MCF 10A (cell line): ENCODE measurements at regions of chr22 and their contacts with region 1.

Region 1: GRCh38 chr22:37792494-37792893 is 15.2 kb upstream of the GCAT start:
- DNase-seq: no peak
- H3K4me3 Mint-ChIP-seq: no peak overlapping the region
- H3K27ac Mint-ChIP-seq: no peak overlapping the region
- H3K4me1 Mint-ChIP-seq: peaks cover 5% of the 10 kb centered on the region
- H3K27me3 Mint-ChIP-seq: no peaks in the 10 kb centered on the region
- CTCF ChIP-seq: no peak

Region 2: GRCh38 chr22:37538590-37539357 is 253.7 kb before region 1 on chr22:
- CTCF ChIA-PET with region 1: no interaction called
- POLR2A ChIA-PET with region 1: no interaction called
- intact Hi-C with region 1: loop called (anchors 5 kb)
- DNase-seq: peak; percentile 95
- H3K4me3 Mint-ChIP-seq: no peak overlapping the region
- H3K27ac Mint-ChIP-seq: peak overlapping the region; percentile 34
- H3K4me1 Mint-ChIP-seq: peaks cover 32% of the 10 kb centered on the region
- H3K27me3 Mint-ChIP-seq: no peaks in the 10 kb centered on the region
- CTCF ChIP-seq: peak; percentile 97

Region 3: GRCh38 chr22:37623075-37624016 is 169.1 kb before region 1 on chr22:
- CTCF ChIA-PET with region 1: interaction called, 5 read pairs
- POLR2A ChIA-PET with region 1: no interaction called
- intact Hi-C with region 1: loop called (anchors 1 kb)
- DNase-seq: peak; percentile 63
- H3K4me3 Mint-ChIP-seq: no peak overlapping the region
- H3K27ac Mint-ChIP-seq: no peak overlapping the region
- H3K4me1 Mint-ChIP-seq: no peaks in the 10 kb centered on the region
- H3K27me3 Mint-ChIP-seq: no peaks in the 10 kb centered on the region
- CTCF ChIP-seq: peak; percentile 70

Region 4: GRCh38 chr22:37676736-37677492 is 115.6 kb before region 1 on chr22:
- CTCF ChIA-PET with region 1: interaction called, 3 read pairs
- POLR2A ChIA-PET with region 1: no interaction called
- intact Hi-C with region 1: loop called (anchors 2 kb)
- DNase-seq: peak; percentile 94
- H3K4me3 Mint-ChIP-seq: peak overlapping the region; percentile 75
- H3K27ac Mint-ChIP-seq: peak overlapping the region; percentile 66
- H3K4me1 Mint-ChIP-seq: peaks cover 25% of the 10 kb centered on the region
- H3K27me3 Mint-ChIP-seq: no peaks in the 10 kb centered on the region
- CTCF ChIP-seq: no peak